K562 (cell line): ENCODE measurements at regions of chr4 and their contacts with region 1.

Region 1: DNA sequence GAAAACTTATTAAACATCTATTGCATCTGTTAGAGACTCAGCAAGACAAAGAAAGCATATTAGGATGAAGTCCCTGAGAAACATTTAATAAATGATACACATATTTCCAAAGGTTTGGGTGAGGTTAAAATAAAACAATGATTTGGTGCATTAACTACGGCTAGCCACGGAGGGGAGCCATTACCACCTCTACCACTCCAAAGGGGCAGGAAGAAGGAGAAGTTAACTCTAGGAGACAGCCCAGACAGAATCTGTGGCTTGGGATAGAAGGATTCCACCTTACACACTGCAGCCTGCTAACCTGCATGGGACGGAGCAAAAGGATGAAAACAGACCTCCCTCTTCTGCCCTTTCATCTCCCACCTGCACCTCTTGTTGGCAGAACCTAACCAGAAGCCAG is 189.1 kb upstream of the C1QTNF7 start:
- DNase-seq: peak; percentile 19 to 41 (median 22)
- ATAC-seq: peak; percentile 78
- H3K4me3 ChIP-seq: no peak overlapping the region
- H3K27ac ChIP-seq: no peak overlapping the region
- H3K4me1 ChIP-seq: no peaks in the 10 kb centered on the region
- H3K27me3 ChIP-seq: peaks cover 0 to 7% of the 10 kb centered on the region in 2 experiments; a peak in 1 of 5 replicates
- CTCF ChIP-seq: peak; percentile 51 to 70 (median 60)
- EP300 ChIP-seq: no peak
- POLR2A ChIP-seq: no peak
- RAD21 ChIP-seq: peak; percentile 68 to 74

Region 2: GRCh38 chr4:15215109-15215508 is 23.6 kb before region 1 on chr4:
- CTCF ChIA-PET with region 1: no interaction called
- POLR2A ChIA-PET with region 1: no interaction called
- in situ Hi-C with region 1: no loop called
- intact Hi-C with region 1: no loop called
- DNase-seq: no peak
- ATAC-seq: no peak
- H3K4me3 ChIP-seq: no peak overlapping the region
- H3K27ac ChIP-seq: no peak overlapping the region
- H3K4me1 ChIP-seq: no peaks in the 10 kb centered on the region; a peak in 1 of 5 replicates
- H3K27me3 ChIP-seq: no peaks in the 10 kb centered on the region
- CTCF ChIP-seq: no peak
- EP300 ChIP-seq: no peak
- POLR2A ChIP-seq: no peak
- RAD21 ChIP-seq: no peak

Region 3: DNA sequence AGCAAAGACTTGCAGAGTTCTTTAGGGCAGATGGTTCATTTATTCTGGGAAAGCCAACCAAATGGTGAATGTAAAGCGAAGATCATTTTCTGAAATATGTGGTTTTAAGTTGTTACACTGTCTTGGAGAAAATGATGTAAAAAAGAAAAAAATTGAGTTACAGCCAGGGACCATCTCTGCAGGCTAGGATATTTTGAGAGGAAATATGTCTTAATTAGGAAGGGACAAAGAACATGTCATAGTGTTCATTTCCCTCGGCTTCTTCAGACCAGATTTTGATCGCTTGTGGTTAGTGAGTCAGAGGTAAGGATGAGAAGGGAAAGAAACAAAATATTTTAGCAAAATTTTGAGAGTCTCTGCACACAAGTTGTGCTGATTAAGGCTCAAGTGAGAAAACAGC is 130.1 kb after region 1 on chr4:
- CTCF ChIA-PET with region 1: no interaction called
- POLR2A ChIA-PET with region 1: no interaction called
- in situ Hi-C with region 1: no loop called
- intact Hi-C with region 1: no loop called
- DNase-seq: no peak
- ATAC-seq: no peak
- H3K4me3 ChIP-seq: no peak overlapping the region
- H3K27ac ChIP-seq: no peak overlapping the region
- H3K4me1 ChIP-seq: no peaks in the 10 kb centered on the region
- H3K27me3 ChIP-seq: no peaks in the 10 kb centered on the region; a peak in 1 of 5 replicates
- CTCF ChIP-seq: no peak
- EP300 ChIP-seq: no peak
- POLR2A ChIP-seq: no peak
- RAD21 ChIP-seq: no peak

Region 4: DNA sequence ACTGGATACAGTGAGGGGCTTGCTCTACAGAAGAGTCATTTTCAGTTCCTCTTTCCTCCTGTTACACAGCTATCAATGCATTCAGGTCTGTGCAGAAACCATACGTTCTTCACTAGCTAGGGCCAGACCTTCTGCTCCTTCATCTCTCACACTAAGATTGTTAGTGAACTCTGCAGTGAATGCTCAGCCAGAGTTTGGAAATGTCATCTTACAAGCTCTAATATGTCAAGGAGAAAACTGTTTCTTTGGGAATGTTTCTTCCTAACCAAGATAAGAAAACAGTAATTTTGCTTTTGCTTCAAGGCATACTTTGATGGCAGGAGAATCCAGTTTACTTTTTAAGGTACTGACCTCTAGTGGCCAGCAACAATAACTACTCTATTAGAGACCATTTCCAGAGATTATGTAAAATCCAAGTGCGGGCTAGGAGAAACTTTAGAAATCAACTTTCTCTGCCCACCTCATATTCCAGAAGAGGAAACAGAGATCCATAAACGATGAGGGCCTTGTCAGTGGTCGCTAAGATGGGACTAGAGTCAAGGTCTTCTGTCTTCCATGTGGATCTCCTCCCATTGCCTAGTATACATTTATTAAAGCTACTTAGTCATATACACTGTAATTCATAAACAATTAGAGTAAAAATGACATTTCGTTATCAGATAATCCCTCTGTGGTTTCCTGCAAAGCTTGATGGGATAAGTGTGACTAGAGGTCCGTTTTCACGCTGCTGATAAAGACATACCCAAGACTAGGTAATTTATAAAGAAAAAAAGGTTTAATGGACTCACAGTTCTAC is 218.9 kb after region 1 on chr4:
- CTCF ChIA-PET with region 1: interaction called, 7 read pairs
- POLR2A ChIA-PET with region 1: no interaction called
- in situ Hi-C with region 1: loop called (anchors 10 kb)
- intact Hi-C with region 1: loop called (anchors 2 kb)
- DNase-seq: peak; percentile 27 to 37 (median 30)
- ATAC-seq: peak; percentile 86
- H3K4me3 ChIP-seq: no peak overlapping the region
- H3K27ac ChIP-seq: no peak overlapping the region
- H3K4me1 ChIP-seq: no peaks in the 10 kb centered on the region
- H3K27me3 ChIP-seq: no peaks in the 10 kb centered on the region
- CTCF ChIP-seq: peak; percentile 42 to 79 (median 66); a peak in 5 of 6 replicates
- EP300 ChIP-seq: no peak
- POLR2A ChIP-seq: no peak
- RAD21 ChIP-seq: peak; percentile 64 to 77